ENCODE measurements at regions of chr13 and their contacts with region 1.

Region 1: DNA sequence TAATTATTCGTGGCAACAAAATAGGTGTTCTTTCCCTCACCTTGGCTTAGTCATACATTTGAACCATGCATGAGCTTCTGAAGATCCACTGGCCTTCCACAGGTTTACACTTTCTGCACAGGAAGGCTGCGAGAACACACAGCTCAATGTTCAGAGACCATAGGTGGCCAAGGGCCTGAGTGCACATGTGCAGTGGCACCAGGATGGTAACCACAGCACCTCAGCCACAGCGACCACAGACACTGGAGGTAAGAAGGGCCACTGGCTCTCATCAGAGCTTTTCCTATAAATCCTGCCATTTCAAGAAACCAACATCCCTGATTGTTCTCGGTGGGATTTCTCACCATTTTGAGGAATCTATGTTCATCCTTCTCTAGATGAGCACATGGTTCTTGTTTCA is 1.6 kb downstream of the DCLK1 start:
- DNase-seq: no peak
- H3K4me3 ChIP-seq: no peak overlapping the region
- H3K27ac ChIP-seq: no peak overlapping the region
- H3K4me1 ChIP-seq: peaks cover 0 to under 1% (median 0%) of the 10 kb centered on the region in 4 donors
- H3K27me3 ChIP-seq: peaks cover 37% of the 10 kb centered on the region
- CTCF ChIP-seq: no peak
- EP300 ChIP-seq: no peak
- POLR2A ChIP-seq: no peak

Region 2: DNA sequence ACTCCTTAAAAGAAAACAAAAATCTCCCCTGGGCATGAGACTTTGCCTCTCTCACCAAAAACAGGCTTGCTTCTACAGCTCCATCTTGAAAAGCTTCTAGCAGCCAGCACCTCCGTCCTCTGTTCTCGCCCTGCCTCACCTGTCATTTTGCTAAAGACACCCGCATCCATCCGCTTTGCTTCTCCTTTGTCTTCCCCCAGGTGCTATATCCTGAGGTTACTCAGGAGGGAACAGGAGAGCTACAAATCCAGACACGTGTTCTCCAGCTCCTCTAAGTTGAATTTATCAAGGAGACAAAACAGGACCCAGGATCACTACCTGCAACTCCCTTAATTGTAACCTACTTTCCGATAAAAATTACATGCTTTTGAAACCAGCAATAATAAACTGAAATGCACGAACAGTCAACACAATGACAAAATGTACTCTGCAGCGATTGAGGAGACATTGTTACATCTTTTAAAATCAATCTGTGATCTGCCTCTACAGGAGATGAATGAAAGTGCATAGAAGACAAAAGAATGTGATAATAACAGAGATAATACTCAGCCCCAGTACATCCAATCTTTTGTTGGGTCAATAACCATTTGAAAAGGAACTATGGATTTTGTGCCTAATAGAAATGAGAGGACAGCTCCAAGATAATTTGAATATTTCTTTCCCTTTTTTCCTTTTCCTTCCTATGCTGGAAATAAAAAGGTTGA is 219.6 kb before region 1 on chr13:
- in situ Hi-C with region 1: no loop called
- intact Hi-C with region 1: loop called (anchors 5 kb)
- DNase-seq: no peak
- H3K4me3 ChIP-seq: no peak overlapping the region
- H3K27ac ChIP-seq: no peak overlapping the region
- H3K4me1 ChIP-seq: no peaks in the 10 kb centered on the region
- H3K27me3 ChIP-seq: no peaks in the 10 kb centered on the region
- CTCF ChIP-seq: no peak
- EP300 ChIP-seq: no peak
- POLR2A ChIP-seq: no peak

Region 3: GRCh38 chr13:36395280-36395679 is 265.7 kb after region 1 on chr13:
- in situ Hi-C with region 1: no loop called
- intact Hi-C with region 1: no loop called
- DNase-seq: no peak
- H3K4me3 ChIP-seq: no peak overlapping the region
- H3K27ac ChIP-seq: no peak overlapping the region
- H3K4me1 ChIP-seq: no peaks in the 10 kb centered on the region
- H3K27me3 ChIP-seq: no peaks in the 10 kb centered on the region
- CTCF ChIP-seq: peak in 2 of 5 experiments; percentile 19 to 35
- EP300 ChIP-seq: no peak
- POLR2A ChIP-seq: no peak